ENCODE measurements at regions of chr6 and their contacts with region 1.

Region 1: DNA sequence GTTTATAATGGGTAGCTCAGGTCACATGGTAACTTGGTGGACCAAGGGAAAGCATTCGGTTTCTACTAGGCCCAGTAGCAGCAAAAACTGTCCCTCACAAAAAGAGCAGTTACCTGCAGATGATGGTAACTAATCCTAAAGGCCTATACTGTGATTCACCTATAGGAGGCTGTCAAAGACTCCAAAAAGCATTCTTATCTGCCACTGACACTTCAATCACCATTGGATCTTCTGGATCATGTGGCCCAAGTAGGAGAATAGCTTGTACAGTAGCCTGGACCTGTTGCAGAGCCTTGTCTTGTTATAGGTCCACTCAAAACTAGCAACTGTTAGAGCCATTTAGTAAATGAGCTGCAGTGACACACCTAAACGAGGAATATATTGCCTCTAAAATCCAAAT is 23.2 kb upstream of the FILIP1 start:
- DNase-seq: no peak
- H3K4me3 ChIP-seq: no peak overlapping the region
- H3K27ac ChIP-seq: no peak overlapping the region
- H3K4me1 ChIP-seq: no peaks in the 10 kb centered on the region
- H3K27me3 ChIP-seq: no peaks in the 10 kb centered on the region
- CTCF ChIP-seq: no peak

Region 2: DNA sequence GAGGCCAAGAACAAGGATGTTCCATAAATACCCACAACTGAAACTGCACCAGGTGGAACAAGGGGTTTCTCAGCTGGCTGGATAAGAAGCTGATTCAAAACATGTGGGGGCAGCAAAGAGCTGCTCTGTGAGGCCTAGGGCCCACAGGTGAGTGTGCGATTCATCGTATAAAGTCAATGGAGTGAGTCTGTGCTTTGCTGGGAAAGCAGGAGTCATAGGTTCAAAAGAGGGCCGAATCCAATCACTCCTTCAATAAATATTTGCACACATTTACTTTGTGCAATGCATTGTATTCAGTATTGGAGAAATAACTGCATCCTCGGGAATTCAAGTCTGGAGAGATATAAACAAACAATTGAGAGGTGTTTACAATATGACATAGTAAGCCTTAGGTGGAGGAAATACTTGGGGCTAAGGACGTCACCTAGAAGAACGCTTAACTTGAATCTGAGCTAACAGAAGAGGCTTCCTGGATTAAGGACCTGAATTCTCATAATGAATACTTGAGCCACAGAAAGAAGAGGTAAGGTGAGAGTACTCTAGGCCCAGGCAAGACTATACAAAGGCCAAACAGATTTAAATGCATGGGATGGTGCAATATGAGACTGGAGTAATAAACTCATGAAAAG is 148.5 kb before region 1 on chr6:
- intact Hi-C with region 1: loop called (anchors 10 kb)
- DNase-seq: no peak
- H3K4me3 ChIP-seq: no peak overlapping the region
- H3K27ac ChIP-seq: peak overlapping the region; percentile 73
- H3K4me1 ChIP-seq: peaks cover 83% of the 10 kb centered on the region
- H3K27me3 ChIP-seq: no peaks in the 10 kb centered on the region
- CTCF ChIP-seq: peak; percentile 67

Region 3: DNA sequence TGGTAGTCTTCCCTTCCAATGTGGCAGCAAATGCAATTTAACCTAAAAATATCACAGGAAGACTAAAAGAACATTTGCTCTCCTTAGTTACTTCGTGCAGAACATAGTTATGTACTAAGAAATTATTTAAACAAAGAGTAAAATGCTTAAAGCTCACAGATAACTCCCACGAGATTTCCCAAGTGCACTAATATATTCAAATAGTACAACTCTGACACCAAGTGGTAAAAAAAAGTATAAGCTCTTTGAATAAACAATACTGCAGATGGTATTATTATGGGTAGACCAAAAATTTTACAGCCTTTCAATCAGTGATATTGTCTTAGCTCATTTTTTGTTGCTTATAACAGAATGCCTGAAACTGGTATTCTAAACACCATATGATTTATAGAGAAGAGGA is 29.6 kb after region 1 on chr6:
- intact Hi-C with region 1: no loop called
- DNase-seq: no peak
- H3K4me3 ChIP-seq: no peak overlapping the region
- H3K27ac ChIP-seq: no peak overlapping the region
- H3K4me1 ChIP-seq: no peaks in the 10 kb centered on the region
- H3K27me3 ChIP-seq: no peaks in the 10 kb centered on the region
- CTCF ChIP-seq: peak; percentile 22